Activated CD4-positive, alpha-beta memory T cell treated with anti-CD3 and anti-CD28 coated beads, Interleukin-2, amount 10 ng/mL, durations not matched to agents 7 days and 5 days (primary cell): ENCODE measurements at regions of chr3 and their contacts with region 1.

Region 1: DNA sequence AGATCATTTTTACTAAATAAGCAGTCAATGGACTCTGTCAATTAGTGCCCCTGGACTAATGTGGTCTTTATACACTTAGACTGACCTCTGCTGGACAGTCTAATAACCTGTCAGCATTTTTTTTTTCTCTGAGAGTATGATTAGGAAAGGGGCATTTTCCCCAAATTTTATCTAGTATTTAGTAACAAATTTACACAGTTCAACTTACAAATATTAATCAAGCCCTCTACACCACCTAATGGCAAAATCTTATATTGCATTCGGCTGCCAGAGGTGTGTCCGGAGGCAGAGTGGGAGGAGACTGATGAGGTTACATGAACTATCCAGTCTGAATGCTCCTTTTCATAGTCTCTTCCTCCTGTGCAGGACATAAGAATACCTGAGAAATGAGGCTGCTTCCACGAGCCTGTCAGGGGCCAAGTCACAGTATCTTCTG is 36.0 kb upstream of the COLQ start:
- DNase-seq: peak; percentile 81
- H3K4me3 Mint-ChIP-seq: no peak overlapping the region
- H3K27ac Mint-ChIP-seq: peak overlapping the region; percentile 66
- H3K4me1 Mint-ChIP-seq: peaks cover 22% of the 10 kb centered on the region
- H3K27me3 Mint-ChIP-seq: no peaks in the 10 kb centered on the region

Region 2: DNA sequence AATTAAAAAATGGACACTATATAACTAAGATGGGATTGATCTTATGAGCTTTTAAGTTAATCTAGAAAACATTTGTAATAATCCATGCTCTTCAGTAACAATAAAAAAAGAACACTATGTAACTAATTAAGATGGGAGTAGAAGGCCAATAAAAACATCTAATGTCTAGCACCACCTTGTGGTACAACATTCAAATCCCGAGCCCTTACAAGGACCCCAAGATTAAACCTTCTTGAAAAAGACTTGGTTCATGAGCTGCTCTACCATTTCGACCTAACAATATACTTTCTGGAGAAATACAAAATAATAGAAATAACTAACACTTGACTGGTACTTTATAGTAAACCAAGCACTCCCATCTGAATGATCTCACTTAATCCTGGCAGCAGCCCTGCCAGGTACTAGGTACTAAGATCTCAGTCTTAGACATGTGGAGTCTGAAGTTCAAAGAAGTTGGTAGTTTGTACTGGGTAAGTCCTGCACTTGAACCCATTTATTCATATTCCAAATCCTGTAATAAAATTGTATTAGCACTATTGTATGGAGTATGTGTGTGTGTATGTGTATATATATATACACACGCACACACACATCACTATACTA is 152.0 kb before region 1 on chr3:
- CTCF ChIA-PET with region 1: interaction called, 11 read pairs
- POLR2A ChIA-PET with region 1: no interaction called
- DNase-seq: peak; percentile 22
- H3K4me3 Mint-ChIP-seq: no peak overlapping the region
- H3K27ac Mint-ChIP-seq: no peak overlapping the region
- H3K4me1 Mint-ChIP-seq: peaks cover 12% of the 10 kb centered on the region
- H3K27me3 Mint-ChIP-seq: no peaks in the 10 kb centered on the region

Region 3: GRCh38 chr3:15535732-15536131 is 21.8 kb before region 1 on chr3:
- CTCF ChIA-PET with region 1: interaction called, 7 read pairs
- POLR2A ChIA-PET with region 1: interaction called, 13 read pairs
- DNase-seq: peak; percentile 72
- H3K4me3 Mint-ChIP-seq: peak overlapping the region; percentile 2
- H3K27ac Mint-ChIP-seq: peak overlapping the region; percentile 97
- H3K4me1 Mint-ChIP-seq: peaks cover 56% of the 10 kb centered on the region
- H3K27me3 Mint-ChIP-seq: no peaks in the 10 kb centered on the region

Region 4: DNA sequence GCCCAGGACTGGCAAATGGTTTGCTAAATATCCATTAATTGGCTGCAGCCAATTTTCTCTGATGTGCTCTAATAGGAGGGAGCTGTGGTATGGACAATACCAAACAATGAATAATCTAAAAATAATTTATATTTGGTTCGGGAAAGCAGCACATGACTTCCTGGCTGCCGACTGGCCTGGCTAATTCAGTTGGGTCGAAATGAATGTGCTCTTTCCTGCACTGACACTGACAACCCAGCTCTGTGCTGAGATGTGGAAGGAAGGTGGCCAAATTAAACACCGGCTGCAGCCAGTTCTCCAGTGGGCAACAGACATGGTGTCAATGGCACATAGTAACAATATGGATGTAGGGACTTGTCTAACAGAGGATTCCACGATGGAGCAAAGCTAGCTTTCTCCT is 14.9 kb before region 1 on chr3:
- CTCF ChIA-PET with region 1: interaction called, 11 read pairs
- POLR2A ChIA-PET with region 1: interaction called, 7 read pairs
- DNase-seq: no peak
- H3K4me3 Mint-ChIP-seq: no peak overlapping the region
- H3K27ac Mint-ChIP-seq: no peak overlapping the region
- H3K4me1 Mint-ChIP-seq: peaks cover 35% of the 10 kb centered on the region
- H3K27me3 Mint-ChIP-seq: no peaks in the 10 kb centered on the region